Activated naive CD4-positive, alpha-beta T cell treated with anti-CD3 and anti-CD28 coated beads, Interleukin-2, amount 10 ng/mL, durations not matched to agents 7 days and 5 days (primary cell): ENCODE measurements at regions of chr6 and their contacts with region 1.

Region 1: GRCh38 chr6:42009966-42010891 is 40.1 kb upstream of the TAF8 start:
- DNase-seq: peak; percentile 57
- H3K4me3 Mint-ChIP-seq: peak overlapping the region; percentile 54
- H3K27ac Mint-ChIP-seq: peak overlapping the region; percentile 92
- H3K4me1 Mint-ChIP-seq: peaks cover 77% of the 10 kb centered on the region
- H3K27me3 Mint-ChIP-seq: no peaks in the 10 kb centered on the region

Region 2: DNA sequence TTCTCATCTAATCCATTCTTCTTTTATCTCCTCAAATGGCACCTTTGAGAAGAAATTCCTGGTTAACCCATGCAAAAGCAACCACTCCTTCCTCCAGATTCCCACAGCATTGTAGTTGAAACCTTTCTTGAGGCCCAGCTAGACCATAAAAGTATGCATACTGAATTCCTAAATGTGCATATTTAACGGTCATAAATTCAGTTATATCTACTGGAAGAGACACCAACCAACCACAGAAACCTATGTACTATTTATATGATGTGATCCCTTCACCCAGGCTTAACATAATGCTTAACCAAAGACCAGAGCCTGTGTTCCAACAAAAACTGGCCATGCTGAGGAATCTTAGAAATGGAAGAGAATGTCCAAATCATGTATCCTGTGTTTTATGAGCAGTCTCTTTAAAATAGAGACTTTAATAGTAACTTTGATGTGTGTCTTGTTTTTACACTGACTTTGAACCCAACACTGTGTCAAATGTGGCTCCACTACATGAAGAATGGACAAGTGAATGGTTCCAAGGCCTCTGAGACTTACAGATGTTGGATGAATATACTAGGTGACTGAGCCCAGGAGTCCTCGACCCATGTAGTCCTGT is 28.7 kb after region 1 on chr6:
- CTCF ChIA-PET with region 1: interaction called, 10 read pairs
- DNase-seq: no peak
- H3K4me3 Mint-ChIP-seq: peak overlapping the region; percentile 73
- H3K27ac Mint-ChIP-seq: peak overlapping the region; percentile 98
- H3K4me1 Mint-ChIP-seq: peaks cover 87% of the 10 kb centered on the region
- H3K27me3 Mint-ChIP-seq: no peaks in the 10 kb centered on the region

Region 3: DNA sequence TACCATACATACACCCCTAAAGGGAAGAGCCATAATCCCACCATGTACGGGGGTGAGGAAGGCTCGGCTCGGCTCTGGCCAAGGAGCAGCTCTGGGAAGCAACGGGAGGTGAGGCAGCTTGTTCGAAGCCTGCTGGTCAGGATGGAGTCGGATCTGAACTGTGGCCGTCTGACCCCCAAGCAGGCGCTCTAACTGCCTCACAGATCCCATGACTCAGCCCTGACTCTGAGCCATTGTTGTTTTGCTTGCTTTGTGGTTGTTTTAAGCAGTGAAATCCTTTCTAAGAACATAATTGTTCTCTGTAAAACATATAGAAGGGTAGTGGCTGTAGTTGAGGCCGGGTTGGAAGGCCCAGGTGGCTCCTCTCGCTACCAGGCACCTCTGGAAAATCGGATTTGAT is 121.3 kb after region 1 on chr6:
- CTCF ChIA-PET with region 1: no interaction called
- DNase-seq: no peak
- H3K4me3 Mint-ChIP-seq: no peak overlapping the region
- H3K27ac Mint-ChIP-seq: no peak overlapping the region
- H3K4me1 Mint-ChIP-seq: peaks cover 2% of the 10 kb centered on the region
- H3K27me3 Mint-ChIP-seq: peaks cover 23% of the 10 kb centered on the region